ENCODE measurements at regions of chr5 and their contacts with region 1.

Region 1: GRCh38 chr5:177317959-177318377 is 6.3 kb upstream of the MXD3 start:
- DNase-seq: peak; percentile 65 to 77 (median 75)
- ATAC-seq: peak in 3 of 4 donors; percentile 47 to 55 (median 49)
- H3K4me3 ChIP-seq: no peak overlapping the region
- H3K27ac ChIP-seq: no peak overlapping the region
- H3K4me1 ChIP-seq: peaks cover 0 to 18% (median under 1%) of the 10 kb centered on the region in 12 donors
- H3K27me3 ChIP-seq: no peaks in the 10 kb centered on the region
- CTCF ChIP-seq: peak; percentile 67 to 90 (median 82)
- POLR2A ChIP-seq: no peak

Region 2: DNA sequence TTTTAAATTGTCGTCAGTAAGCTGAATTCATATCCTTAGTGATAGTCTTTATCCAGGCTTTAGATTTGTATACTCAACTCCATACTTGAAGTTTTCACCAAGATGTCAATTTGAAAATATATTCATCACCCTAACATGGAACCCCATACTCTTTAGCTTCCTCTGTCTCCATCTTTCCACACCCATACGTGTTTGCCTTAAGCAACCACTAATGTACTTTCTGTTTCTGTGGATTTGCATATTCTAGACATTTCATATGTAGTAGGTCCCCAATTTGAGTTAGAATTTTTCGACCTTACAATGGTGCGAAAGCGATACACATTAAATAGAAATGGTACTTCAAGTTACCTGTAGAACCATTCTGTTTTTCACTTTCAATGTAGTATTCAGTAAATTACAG is 119.2 kb before region 1 on chr5:
- intact Hi-C with region 1: no loop called
- DNase-seq: no peak
- ATAC-seq: no peak
- H3K4me3 ChIP-seq: no peak overlapping the region
- H3K27ac ChIP-seq: no peak overlapping the region
- H3K4me1 ChIP-seq: peaks cover 0 to 21% (median 5%) of the 10 kb centered on the region in 12 donors
- H3K27me3 ChIP-seq: no peaks in the 10 kb centered on the region
- CTCF ChIP-seq: no peak
- POLR2A ChIP-seq: no peak

Region 3: DNA sequence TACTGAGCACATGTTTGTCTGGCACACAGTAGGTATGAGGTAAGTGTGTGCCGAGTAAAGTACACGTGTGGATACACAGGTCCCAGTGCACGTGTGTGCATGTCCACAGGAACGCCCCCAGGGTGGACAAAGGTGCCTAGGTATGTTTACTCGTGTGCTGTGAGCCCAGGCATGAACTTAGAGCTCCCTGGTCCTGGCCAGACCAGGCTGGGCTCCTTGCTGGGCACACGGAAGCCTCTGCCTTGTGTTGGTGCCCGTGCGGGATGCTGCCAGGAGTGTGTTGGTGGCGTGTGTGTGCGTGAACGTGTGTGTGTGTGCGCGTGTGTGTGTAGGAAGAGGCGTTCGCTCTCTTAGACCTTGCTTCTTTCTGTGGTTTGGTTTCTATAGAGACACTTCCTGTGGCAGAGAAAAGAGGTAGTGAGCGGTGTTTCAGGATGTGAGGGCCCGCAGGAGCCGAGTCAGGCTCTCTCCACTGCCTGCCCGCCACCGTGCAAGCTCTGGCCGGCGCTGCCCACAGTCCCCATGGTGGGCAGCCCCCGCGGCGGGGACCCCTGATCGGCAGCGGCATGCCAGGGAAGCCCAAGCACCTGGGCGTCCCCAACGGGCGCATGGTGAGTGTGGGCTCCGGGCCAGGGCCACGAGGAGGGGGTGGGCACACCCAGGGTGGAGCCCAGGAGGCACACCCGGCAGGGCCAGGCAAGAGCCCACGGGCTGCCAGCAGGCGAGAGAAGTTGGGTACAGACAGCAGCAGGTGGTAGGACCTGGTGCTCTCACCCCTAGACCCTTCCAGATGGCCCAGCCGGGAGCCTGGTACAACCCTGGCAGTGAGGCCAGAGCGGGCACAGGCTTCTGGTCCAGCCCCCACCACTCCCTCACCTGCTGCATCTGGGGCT is 39.7 kb after region 1 on chr5 and contains the start of gene RGS14:
- intact Hi-C with region 1: loop called in 2 of 10 experiments (anchors 5 to 10 kb)
- DNase-seq: peak in 2 of 5 donors; percentile 38 to 75
- ATAC-seq: peak in 3 of 4 donors; percentile 50 to 66 (median 64)
- H3K4me3 ChIP-seq: peak within 1 kb of the TSS in 9 of 12 donors; percentile 17 to 73 (median 44)
- H3K27ac ChIP-seq: peak within 1 kb of the TSS in 5 of 12 donors; percentile 34 to 88 (median 42)
- H3K4me1 ChIP-seq: peaks cover 0 to 79% (median 16%) of the 10 kb centered on the region in 12 donors
- H3K27me3 ChIP-seq: no peaks in the 10 kb centered on the region
- CTCF ChIP-seq: no peak
- POLR2A ChIP-seq: no peak
- total RNA-seq, gene RGS14: 1.3 to 10.7 (median 2.9) TPM

Region 4: GRCh38 chr5:177382423-177383029 is 64.6 kb after region 1 on chr5:
- intact Hi-C with region 1: loop called in 2 of 10 experiments (anchors 5 to 10 kb)
- DNase-seq: no peak
- ATAC-seq: peak in 3 of 4 donors; percentile 49 to 68 (median 67)
- H3K4me3 ChIP-seq: no peak overlapping the region
- H3K27ac ChIP-seq: no peak overlapping the region
- H3K4me1 ChIP-seq: no peaks in the 10 kb centered on the region
- H3K27me3 ChIP-seq: peaks cover 0 to 23% (median 0%) of the 10 kb centered on the region in 9 donors
- CTCF ChIP-seq: peak in 9 of 12 donors; percentile 9 to 41 (median 25)
- POLR2A ChIP-seq: no peak

Region 5: DNA sequence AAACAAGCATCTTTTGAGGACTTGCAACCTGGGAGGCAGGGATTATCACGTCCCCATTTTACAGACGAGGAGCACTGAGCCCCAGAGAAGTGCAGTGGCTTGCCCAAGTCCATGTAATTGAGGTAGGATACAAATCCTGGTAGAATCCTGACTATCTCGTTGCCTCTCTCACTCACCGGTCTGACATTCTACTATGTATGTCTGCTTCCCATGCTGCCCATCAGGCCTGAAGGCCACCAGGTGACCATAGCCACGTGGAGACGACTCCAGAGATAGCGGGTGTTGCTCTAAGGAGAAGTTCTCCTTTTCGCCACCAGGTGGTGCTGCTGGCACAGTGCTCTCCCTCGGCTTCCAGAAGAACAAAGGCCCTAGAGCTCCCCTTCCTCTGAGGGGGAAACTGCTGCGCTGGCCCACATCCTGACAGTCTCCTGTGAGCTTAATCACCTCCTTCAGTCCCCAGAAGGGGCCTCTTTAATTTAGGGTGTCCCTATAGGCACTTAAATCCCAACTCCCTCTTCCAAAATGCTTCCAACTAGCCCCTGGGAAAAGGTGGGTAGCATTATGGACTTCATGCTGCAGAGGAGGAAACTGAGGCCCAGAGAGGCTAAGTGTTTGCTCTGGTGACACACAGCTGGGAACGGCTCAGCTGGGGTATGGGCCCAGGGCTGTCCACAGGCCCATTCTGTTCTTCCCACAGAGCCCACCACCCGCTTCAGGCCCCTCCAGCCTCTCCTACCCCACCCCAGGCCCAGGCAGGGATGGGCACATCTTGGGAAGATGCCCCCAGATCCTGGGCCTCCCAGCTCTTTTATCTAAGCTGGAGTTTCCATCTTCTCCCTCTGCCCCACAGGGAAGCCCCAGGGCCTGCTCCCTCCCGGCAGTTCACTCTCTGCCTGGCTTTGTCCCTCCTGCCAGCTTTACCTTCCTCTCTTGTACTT is 72.7 kb after region 1 on chr5:
- intact Hi-C with region 1: loop called in 2 of 10 experiments (anchors 5 to 10 kb)
- DNase-seq: peak; percentile 69 to 83 (median 79)
- ATAC-seq: peak; percentile 77 to 89 (median 82)
- H3K4me3 ChIP-seq: no peak overlapping the region
- H3K27ac ChIP-seq: peak overlapping the region in 1 of 12 donors; percentile 68
- H3K4me1 ChIP-seq: peaks cover 0 to 25% (median 0%) of the 10 kb centered on the region in 12 donors
- H3K27me3 ChIP-seq: peaks cover 0 to 25% (median 0%) of the 10 kb centered on the region in 9 donors
- CTCF ChIP-seq: peak; percentile 4 to 99 (median 98)
- POLR2A ChIP-seq: no peak

Measured in heart left ventricle (tissue), 16 donors.